Endothelial cell of umbilical vein (primary cell): ENCODE measurements at regions of chr1 and their contacts with region 1.

Region 1: DNA sequence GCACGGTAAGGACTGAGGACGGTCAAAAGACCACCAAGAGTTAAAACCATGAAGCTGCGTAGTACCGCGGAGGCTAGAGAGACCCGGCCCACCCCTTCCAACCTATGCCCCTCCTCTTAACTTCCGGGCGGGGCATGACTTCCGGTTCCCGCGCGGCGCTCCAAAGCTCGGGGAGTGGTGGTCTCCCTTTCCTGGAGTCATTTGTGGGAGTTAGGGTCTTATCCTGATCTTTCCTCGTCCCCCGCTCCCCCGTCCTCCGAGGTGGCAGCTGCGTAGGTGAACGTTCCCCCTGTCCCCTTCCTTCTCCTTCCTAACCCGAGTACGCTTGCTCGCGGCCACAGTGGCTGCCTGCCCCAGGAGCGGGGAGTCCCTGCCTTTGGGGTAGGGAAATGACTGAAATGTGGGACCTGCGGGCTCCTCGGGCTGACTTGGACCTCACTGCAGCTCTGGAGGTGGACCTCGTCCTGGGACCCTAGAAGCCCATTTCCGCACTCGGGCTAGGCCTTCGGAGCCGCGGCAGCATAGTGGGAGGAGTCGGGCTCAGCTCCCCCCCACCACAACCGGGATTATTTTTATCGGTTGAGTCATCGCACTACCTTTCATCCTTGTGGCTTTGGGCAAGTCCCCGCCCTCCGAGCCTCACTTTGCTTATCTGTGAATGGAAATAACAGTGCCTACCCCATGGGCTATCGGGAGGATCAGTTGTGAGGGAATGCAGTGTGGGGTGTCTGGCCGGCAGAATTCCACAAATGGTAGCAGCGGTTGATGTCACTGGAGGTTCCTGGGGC is 24.1 kb downstream of the CELA3A start:
- DNase-seq: peak; percentile 88
- H3K4me3 ChIP-seq: peak overlapping the region; percentile 50 to 99 (median 77)
- H3K27ac ChIP-seq: peak overlapping the region; percentile 90
- H3K4me1 ChIP-seq: peaks cover 12% of the 10 kb centered on the region
- H3K27me3 ChIP-seq: no peaks in the 10 kb centered on the region
- CTCF ChIP-seq: no peak
- POLR2A ChIP-seq: peak; percentile 86

Region 2: GRCh38 chr1:21703318-21703963 is 322.1 kb before region 1 on chr1:
- CTCF ChIA-PET with region 1: no interaction called
- POLR2A ChIA-PET with region 1: no interaction called
- dilution Hi-C with region 1: no loop called
- intact Hi-C with region 1: loop called (anchors 10 kb)
- DNase-seq: peak; percentile 72
- H3K4me3 ChIP-seq: no peak overlapping the region
- H3K27ac ChIP-seq: peak overlapping the region; percentile 28
- H3K4me1 ChIP-seq: peaks cover 20% of the 10 kb centered on the region
- H3K27me3 ChIP-seq: no peaks in the 10 kb centered on the region
- CTCF ChIP-seq: peak; percentile 42 to 46
- POLR2A ChIP-seq: no peak

Region 3: GRCh38 chr1:22052115-22053016 is 26.8 kb after region 1 on chr1 and contains the start of gene CDC42:
- CTCF ChIA-PET with region 1: interaction called, 26 read pairs
- POLR2A ChIA-PET with region 1: interaction called, 7 read pairs
- dilution Hi-C with region 1: no loop called
- intact Hi-C with region 1: loop called (anchors 1 kb)
- DNase-seq: peak; percentile 94
- H3K4me3 ChIP-seq: peak within 1 kb of the TSS; percentile 37 to 94 (median 76)
- H3K27ac ChIP-seq: peak within 1 kb of the TSS; percentile 85
- H3K4me1 ChIP-seq: peaks cover 28% of the 10 kb centered on the region
- H3K27me3 ChIP-seq: no peaks in the 10 kb centered on the region
- CTCF ChIP-seq: no peak
- POLR2A ChIP-seq: peak; percentile 97
- total RNA-seq, gene CDC42: 379 and 381 TPM in 2 replicates

Region 4: GRCh38 chr1:22536506-22536905 is 510.9 kb after region 1 on chr1:
- CTCF ChIA-PET with region 1: no interaction called
- POLR2A ChIA-PET with region 1: no interaction called
- dilution Hi-C with region 1: no loop called
- intact Hi-C with region 1: no loop called
- DNase-seq: no peak
- H3K4me3 ChIP-seq: no peak overlapping the region
- H3K27ac ChIP-seq: no peak overlapping the region
- H3K4me1 ChIP-seq: no peaks in the 10 kb centered on the region
- H3K27me3 ChIP-seq: no peaks in the 10 kb centered on the region
- CTCF ChIP-seq: no peak
- POLR2A ChIP-seq: no peak